Motor neuron (in vitro differentiated cells): ENCODE measurements at regions of chr6 and their contacts with region 1.

Region 1: GRCh38 chr6:130885392-130886192 is 58.4 kb downstream of the SMLR1 start:
- ATAC-seq: peak; percentile 69 to 92 (median 76)
- H3K4me3 ChIP-seq: no peak overlapping the region
- H3K27ac ChIP-seq: no peak overlapping the region
- H3K4me1 ChIP-seq: no peaks in the 10 kb centered on the region

Region 2: GRCh38 chr6:131116749-131117360 is 231.3 kb after region 1 on chr6:
- in situ Hi-C with region 1: loop called in 3 of 9 experiments (anchors 10 to 25 kb)
- ATAC-seq: peak in 2 of 8 experiments; percentile 28 to 42
- H3K4me3 ChIP-seq: no peak overlapping the region
- H3K27ac ChIP-seq: no peak overlapping the region
- H3K4me1 ChIP-seq: no peaks in the 10 kb centered on the region

Region 3: GRCh38 chr6:131167773-131168172 is 282.2 kb after region 1 on chr6:
- in situ Hi-C with region 1: loop called in 2 of 9 experiments (anchors 25 kb)
- ATAC-seq: no peak
- H3K4me3 ChIP-seq: no peak overlapping the region
- H3K27ac ChIP-seq: no peak overlapping the region
- H3K4me1 ChIP-seq: no peaks in the 10 kb centered on the region

Region 4: DNA sequence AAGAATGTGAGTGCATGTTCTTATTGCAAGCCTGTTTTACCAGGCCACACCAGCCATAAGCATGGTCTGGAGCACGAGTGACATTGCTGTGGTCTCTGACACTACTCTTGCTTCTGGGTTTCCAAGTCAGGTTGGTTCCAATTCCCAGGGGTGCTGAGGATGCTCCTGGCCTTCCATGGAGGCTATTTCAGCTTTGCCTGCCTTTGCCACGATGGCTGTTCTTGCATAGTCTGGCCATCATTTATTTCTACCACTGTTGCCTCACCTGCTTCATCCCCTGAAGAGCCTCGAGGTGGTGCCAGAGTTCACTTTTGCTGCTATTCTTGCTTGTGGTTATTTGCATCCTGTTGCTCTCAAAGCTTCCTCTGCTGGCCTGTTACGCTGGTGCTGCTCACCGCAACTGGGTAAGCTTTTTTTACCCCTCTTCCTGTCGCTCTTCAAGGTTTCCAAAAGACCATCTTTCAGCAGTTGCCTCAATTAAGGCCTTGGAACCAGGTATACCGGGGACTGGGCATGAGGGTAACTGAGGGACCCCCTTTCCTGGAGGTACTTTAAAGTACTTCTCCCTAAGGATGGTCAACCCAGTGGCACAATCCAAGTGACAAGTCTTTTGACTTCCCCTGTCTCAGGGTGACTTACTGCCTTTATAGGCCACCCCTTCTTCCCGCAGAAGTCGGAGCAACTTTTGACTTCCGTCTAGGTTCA is 314.1 kb after region 1 on chr6:
- in situ Hi-C with region 1: loop called in 1 of 9 experiments (anchors 25 kb)
- ATAC-seq: peak in 5 of 8 experiments; percentile 68 to 99 (median 98)
- H3K4me3 ChIP-seq: no peak overlapping the region
- H3K27ac ChIP-seq: no peak overlapping the region
- H3K4me1 ChIP-seq: no peaks in the 10 kb centered on the region

Region 5: DNA sequence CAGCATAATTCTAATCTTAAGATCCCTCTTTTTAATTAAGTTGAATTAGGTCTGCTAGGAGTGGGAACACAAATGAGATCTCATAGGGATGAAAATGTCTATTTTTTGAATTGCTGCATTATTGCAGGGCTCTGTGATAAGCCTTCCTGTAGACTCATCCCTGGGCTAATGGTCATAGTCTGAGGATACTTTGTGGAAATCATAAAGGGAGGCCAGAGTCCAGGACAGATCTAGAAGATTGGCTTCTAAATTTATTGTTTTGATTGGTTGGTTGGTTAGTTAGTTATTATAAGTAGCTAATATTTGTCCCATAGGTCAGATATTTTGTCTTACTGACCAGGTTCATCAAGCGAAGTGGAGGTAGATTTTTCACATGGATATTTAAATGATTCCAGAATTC is 392.0 kb after region 1 on chr6:
- in situ Hi-C with region 1: no loop called
- ATAC-seq: no peak
- H3K4me3 ChIP-seq: no peak overlapping the region
- H3K27ac ChIP-seq: no peak overlapping the region
- H3K4me1 ChIP-seq: peaks cover 9 to 11% of the 10 kb centered on the region in 2 donors

Region 6: GRCh38 chr6:131532580-131533039 is 647.0 kb after region 1 on chr6:
- in situ Hi-C with region 1: loop called (anchors 10 to 25 kb)
- ATAC-seq: no peak
- H3K4me3 ChIP-seq: no peak overlapping the region
- H3K27ac ChIP-seq: no peak overlapping the region
- H3K4me1 ChIP-seq: no peaks in the 10 kb centered on the region